ENCODE measurements at regions of chr6 and their contacts with region 1.

Region 1: DNA sequence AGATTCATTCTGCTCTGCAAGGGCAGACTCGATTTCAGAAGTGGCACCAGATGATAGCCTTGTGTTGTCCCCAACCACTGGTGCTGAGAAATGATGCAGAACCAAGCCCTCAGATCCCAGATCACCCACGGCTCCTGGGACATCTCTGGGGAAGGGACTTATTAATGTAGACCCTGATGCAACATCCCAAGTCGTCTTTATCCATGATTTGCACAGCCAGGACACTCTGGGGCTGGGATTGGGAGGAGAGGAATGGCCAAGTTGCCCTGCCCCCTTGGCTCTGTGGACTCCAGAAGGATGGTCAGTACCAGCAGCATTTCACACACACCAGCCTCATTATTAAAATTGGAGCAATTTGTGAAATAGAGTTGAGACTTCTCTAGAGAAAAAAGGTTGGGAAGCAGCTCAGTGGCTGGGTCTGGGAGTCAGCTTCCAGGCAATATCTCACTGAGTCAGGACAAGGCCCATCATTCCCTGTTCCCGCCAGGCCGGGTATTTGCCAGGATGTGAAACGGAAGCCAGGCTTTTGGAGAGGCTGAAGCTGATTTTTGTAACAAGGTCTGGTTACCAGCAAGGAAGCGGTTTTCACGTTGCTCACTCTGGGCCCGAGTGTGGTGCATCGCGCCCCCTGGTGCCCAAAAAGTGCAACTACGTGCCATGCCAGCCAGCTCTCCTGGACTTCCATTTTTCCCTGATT is 67.4 kb downstream of the ZBTB2 start:
- DNase-seq: peak; percentile 81

Region 2: GRCh38 chr6:150891888-150892485 is 432.0 kb before region 1 on chr6:
- in situ Hi-C with region 1: loop called (anchors 25 kb)
- DNase-seq: peak; percentile 84

Region 3: DNA sequence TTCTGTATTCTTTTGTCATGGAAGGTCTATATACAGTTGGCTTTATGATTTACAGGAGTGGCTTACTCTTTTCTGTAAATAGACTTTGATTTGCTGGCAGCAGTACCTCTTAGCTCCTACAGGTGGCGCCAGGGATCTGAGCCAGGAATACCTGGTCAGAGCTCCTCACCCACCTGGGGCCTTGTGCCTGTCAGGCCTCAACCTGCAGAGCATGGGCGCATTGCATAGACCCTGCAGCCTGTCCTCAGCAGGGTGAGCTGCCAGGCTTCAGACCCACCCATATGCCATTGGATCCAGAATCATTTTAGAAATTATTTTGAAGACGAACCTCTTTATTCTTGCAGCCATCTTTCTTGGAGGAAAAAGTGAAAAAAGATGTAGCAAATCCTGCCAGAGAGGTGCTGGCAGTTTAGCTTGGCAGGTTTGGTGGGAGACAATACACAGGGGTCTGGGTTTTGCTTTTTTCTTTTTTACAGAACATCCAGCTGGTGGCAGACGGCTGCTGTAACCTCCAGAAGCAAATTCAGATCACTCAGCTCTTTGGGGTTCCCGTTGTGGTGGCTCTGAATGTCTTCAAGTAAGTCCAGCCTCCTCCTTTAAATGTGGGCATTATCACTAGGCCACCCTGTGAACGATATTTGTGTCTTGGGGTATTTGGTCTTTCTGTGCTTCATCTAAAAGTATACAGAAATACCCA is 309.4 kb before region 1 on chr6:
- in situ Hi-C with region 1: loop called (anchors 25 kb)
- DNase-seq: peak; percentile 66

Region 4: DNA sequence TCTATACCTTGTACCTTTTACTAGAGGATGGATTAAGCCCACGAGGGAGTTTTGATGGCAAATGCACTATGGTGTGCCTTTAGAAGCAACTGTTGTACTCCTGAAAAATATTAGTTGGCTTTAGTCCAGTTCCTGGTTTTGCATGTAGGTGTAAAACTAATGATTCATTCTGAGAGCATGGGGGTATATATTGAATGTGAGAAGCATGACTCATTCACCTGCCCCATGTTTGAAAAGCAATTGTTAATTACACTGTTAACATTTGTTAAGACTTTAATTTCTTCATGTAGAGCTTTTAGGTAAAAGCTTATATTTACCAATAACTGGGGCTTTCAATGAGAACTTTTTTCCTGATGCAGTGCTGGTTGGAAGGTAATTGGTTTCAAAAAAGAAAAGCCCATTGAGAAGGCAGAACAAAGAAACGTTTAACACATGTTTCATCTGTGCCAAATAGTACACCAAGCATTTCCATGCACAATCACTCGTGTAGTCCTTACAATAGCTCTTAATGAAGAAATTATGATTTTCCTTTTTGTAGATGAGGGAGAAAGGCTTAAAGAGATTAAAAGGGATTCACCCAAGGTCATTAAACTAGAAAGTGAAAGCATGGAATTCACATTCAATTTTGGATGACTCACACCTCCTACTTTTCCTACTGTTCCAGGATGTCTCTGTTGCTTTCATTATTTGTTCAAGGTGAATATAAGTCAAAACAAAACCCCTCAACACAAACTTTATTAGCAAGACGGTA is 303.9 kb after region 1 on chr6:
- in situ Hi-C with region 1: no loop called
- DNase-seq: no peak

Region 5: GRCh38 chr6:151702851-151703611 is 379.1 kb after region 1 on chr6:
- in situ Hi-C with region 1: no loop called
- DNase-seq: no peak